Adrenal gland (tissue), 19 donors: ENCODE measurements at regions of chr5 and their contacts with region 1.

Region 1: GRCh38 chr5:157594257-157594656 is 18.7 kb upstream of the ADAM19 start:
- DNase-seq: no peak
- H3K4me3 ChIP-seq: no peak overlapping the region
- H3K27ac ChIP-seq: no peak overlapping the region
- H3K4me1 ChIP-seq: no peaks in the 10 kb centered on the region
- H3K27me3 ChIP-seq: no peaks in the 10 kb centered on the region
- CTCF ChIP-seq: no peak
- POLR2A ChIP-seq: no peak

Region 2: GRCh38 chr5:157431544-157432200 is 162.6 kb before region 1 on chr5:
- intact Hi-C with region 1: no loop called
- DNase-seq: peak; percentile 27 to 57 (median 38)
- H3K4me3 ChIP-seq: no peak overlapping the region
- H3K27ac ChIP-seq: no peak overlapping the region
- H3K4me1 ChIP-seq: no peaks in the 10 kb centered on the region
- H3K27me3 ChIP-seq: no peaks in the 10 kb centered on the region
- CTCF ChIP-seq: peak; percentile 37 to 74 (median 62)
- POLR2A ChIP-seq: no peak

Region 3: GRCh38 chr5:157581901-157582300 is 12.4 kb before region 1 on chr5:
- intact Hi-C with region 1: loop called in 1 of 2 experiments (anchors 2 kb)
- DNase-seq: no peak
- H3K4me3 ChIP-seq: no peak overlapping the region
- H3K27ac ChIP-seq: no peak overlapping the region
- H3K4me1 ChIP-seq: no peaks in the 10 kb centered on the region
- H3K27me3 ChIP-seq: no peaks in the 10 kb centered on the region
- CTCF ChIP-seq: no peak
- POLR2A ChIP-seq: no peak